WTC11 (cell line): ENCODE measurements at regions of chr12 and their contacts with region 1.

Region 1: DNA sequence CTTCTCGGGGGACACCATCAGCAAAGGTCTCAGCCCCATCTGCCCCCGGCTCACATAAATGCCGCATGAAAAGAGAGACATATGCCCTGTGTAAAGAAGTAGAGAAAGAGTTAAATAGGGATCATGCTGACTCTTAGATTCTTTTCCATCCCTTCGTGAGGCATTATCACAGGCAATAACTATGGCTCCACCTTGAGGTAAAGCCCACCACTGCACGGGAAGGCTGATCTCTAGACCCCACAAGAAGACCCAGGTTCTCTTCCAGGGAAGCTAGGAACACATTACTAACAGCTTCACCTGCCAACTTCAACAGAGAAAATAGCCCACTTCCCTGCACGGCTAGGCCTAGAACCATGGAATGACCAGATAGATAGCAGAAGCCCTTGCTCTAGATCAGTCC is 14.1 kb upstream of the NOP2 start:
- DNase-seq: peak; percentile 29
- ATAC-seq: peak; percentile 72
- H3K4me3 Mint-ChIP-seq: no peak overlapping the region
- H3K27ac Mint-ChIP-seq: no peak overlapping the region; the same call in 1 of the 2 replicates
- H3K4me1 Mint-ChIP-seq: no peaks in the 10 kb centered on the region
- H3K27me3 Mint-ChIP-seq: no peaks in the 10 kb centered on the region
- CTCF ChIP-seq: no peak

Region 2: GRCh38 chr12:6367065-6367968 is 214.9 kb before region 1 on chr12:
- CTCF ChIA-PET with region 1: no interaction called
- POLR2A ChIA-PET with region 1: no interaction called
- DNase-seq: no peak
- ATAC-seq: no peak
- H3K4me3 Mint-ChIP-seq: no peak overlapping the region
- H3K27ac Mint-ChIP-seq: peak overlapping the region; percentile 33; the same call in 1 of the 2 replicates
- H3K4me1 Mint-ChIP-seq: peaks cover 58% of the 10 kb centered on the region
- H3K27me3 Mint-ChIP-seq: no peaks in the 10 kb centered on the region
- CTCF ChIP-seq: no peak

Region 3: GRCh38 chr12:6570264-6570887 is 11.8 kb before region 1 on chr12:
- CTCF ChIA-PET with region 1: interaction called, 11 read pairs
- POLR2A ChIA-PET with region 1: no interaction called
- DNase-seq: peak; percentile 86
- ATAC-seq: peak; percentile 70
- H3K4me3 Mint-ChIP-seq: peak overlapping the region; percentile 35; the same call in 1 of the 2 replicates
- H3K27ac Mint-ChIP-seq: peak overlapping the region; percentile 62
- H3K4me1 Mint-ChIP-seq: peaks cover 13% of the 10 kb centered on the region
- H3K27me3 Mint-ChIP-seq: no peaks in the 10 kb centered on the region
- CTCF ChIP-seq: no peak